CD4-positive, alpha-beta memory T cell (primary cell): ENCODE measurements at regions of chr1 and their contacts with region 1.

Region 1: GRCh38 chr1:185156854-185157598 is at the starts of genes SWT1 and TRMT1L:
- DNase-seq: peak; percentile 97 to 99 (median 98)
- H3K4me3 ChIP-seq: peak within 1 kb of the TSS; percentile 61 to 88
- H3K4me3 Mint-ChIP-seq: peak within 1 kb of the TSS; percentile 98 to 100 (median 99)
- H3K27ac ChIP-seq: peak within 1 kb of the TSS; percentile 97
- H3K27ac Mint-ChIP-seq: peak within 1 kb of the TSS; percentile 98 to 100 (median 99)
- H3K4me1 ChIP-seq: peaks cover 30% of the 10 kb centered on the region
- H3K4me1 Mint-ChIP-seq: peaks cover 24 to 54% (median 39%) of the 10 kb centered on the region in 4 donors
- H3K27me3 ChIP-seq: no peaks in the 10 kb centered on the region
- H3K27me3 Mint-ChIP-seq: no peaks in the 10 kb centered on the region
- total RNA-seq, gene SWT1: 9.7 to 10.6 TPM
- total RNA-seq, gene TRMT1L: 31.7 to 33.9 TPM

Region 2: GRCh38 chr1:183635606-183636333 is 1521.3 kb before region 1 on chr1 and contains the start of gene ARPC5:
- CTCF ChIA-PET with region 1: no interaction called
- POLR2A ChIA-PET with region 1: no interaction called
- intact Hi-C with region 1: loop called (anchors 1 kb)
- DNase-seq: peak; percentile 94 to 95 (median 94)
- H3K4me3 ChIP-seq: peak within 1 kb of the TSS; percentile 72 to 88
- H3K4me3 Mint-ChIP-seq: peak within 1 kb of the TSS; percentile 100
- H3K27ac ChIP-seq: peak within 1 kb of the TSS; percentile 81
- H3K27ac Mint-ChIP-seq: peak within 1 kb of the TSS; percentile 92 to 100 (median 99)
- H3K4me1 ChIP-seq: peaks cover 44% of the 10 kb centered on the region
- H3K4me1 Mint-ChIP-seq: peaks cover 26 to 54% (median 36%) of the 10 kb centered on the region in 4 donors
- H3K27me3 ChIP-seq: no peaks in the 10 kb centered on the region
- H3K27me3 Mint-ChIP-seq: no peaks in the 10 kb centered on the region
- total RNA-seq, gene ARPC5: 106 to 107 TPM

Region 3: DNA sequence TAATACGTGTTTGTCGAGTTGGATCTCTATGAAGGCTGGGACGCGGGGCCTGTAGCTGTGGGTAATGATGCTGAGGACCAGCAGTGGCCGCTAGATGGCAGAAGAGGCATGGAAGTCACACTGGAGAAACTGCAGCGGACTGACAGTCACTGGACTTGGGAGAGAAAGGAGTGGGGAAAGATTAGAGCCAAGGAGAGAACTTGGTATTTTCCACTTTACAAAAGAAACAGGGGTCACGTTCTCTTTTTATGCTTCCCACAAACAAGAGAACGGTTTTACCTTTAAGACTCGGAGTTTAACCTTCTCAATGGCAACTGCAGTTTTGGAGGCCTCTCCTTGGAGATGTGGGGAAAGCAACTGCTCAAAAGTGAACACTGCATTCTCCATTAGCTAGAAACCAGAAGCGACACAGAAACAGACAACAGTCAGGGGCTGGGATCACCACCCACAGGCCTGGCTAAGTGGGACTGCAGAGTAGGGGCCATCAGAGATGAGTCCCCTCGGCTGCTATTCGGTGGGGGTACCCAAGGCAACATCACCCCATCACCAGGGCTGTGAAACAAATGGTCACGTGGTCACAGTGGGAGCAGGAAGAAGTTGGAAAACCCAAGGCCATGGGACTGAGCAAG is 351.2 kb before region 1 on chr1:
- CTCF ChIA-PET with region 1: no interaction called
- POLR2A ChIA-PET with region 1: interaction called, 3 read pairs
- intact Hi-C with region 1: loop called (anchors 5 kb)
- DNase-seq: peak; percentile 76 to 80 (median 78)
- H3K4me3 ChIP-seq: no peak overlapping the region
- H3K4me3 Mint-ChIP-seq: no peak overlapping the region
- H3K27ac ChIP-seq: no peak overlapping the region
- H3K27ac Mint-ChIP-seq: peak overlapping the region; percentile 53 to 94 (median 86)
- H3K4me1 ChIP-seq: no peaks in the 10 kb centered on the region
- H3K4me1 Mint-ChIP-seq: peaks cover 4 to 7% (median 5%) of the 10 kb centered on the region in 4 donors
- H3K27me3 ChIP-seq: no peaks in the 10 kb centered on the region
- H3K27me3 Mint-ChIP-seq: no peaks in the 10 kb centered on the region

Region 4: GRCh38 chr1:185170291-185170848 is 13.3 kb after region 1 on chr1:
- CTCF ChIA-PET with region 1: interaction called, 15 read pairs
- POLR2A ChIA-PET with region 1: interaction called, 4 read pairs
- intact Hi-C with region 1: no loop called
- DNase-seq: peak; percentile 41 to 51 (median 44)
- H3K4me3 ChIP-seq: no peak overlapping the region
- H3K4me3 Mint-ChIP-seq: peak overlapping the region in 1 of 8 donors; percentile 57
- H3K27ac ChIP-seq: no peak overlapping the region
- H3K27ac Mint-ChIP-seq: peak overlapping the region in 4 of 7 donors; percentile 37 to 55 (median 40)
- H3K4me1 ChIP-seq: no peaks in the 10 kb centered on the region
- H3K4me1 Mint-ChIP-seq: peaks cover 0 to 4% (median 2%) of the 10 kb centered on the region in 4 donors
- H3K27me3 ChIP-seq: no peaks in the 10 kb centered on the region
- H3K27me3 Mint-ChIP-seq: no peaks in the 10 kb centered on the region

Region 5: DNA sequence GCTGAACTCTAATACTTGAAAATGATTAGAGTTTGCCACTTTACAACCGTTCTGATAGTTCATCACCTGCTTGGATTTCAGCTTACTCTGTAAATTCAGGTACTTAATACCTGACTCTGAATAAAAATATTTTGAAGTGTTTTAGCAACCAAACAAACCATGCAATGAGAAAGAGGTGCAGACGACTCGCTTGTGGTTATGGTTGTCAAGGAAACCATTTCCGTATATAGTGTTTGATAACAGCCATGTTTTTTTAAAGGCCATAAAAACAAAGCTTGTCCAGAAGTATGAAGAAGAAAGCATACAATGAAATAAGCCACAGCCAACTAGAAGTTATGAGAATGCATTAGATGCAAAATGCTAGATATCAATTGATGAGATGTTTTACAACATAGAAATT is 410.0 kb after region 1 on chr1:
- CTCF ChIA-PET with region 1: no interaction called
- POLR2A ChIA-PET with region 1: interaction called, 14 read pairs
- intact Hi-C with region 1: loop called (anchors 1 kb)
- DNase-seq: peak; percentile 85 to 94 (median 91)
- H3K4me3 ChIP-seq: peak overlapping the region in 1 of 2 donors; percentile 21
- H3K4me3 Mint-ChIP-seq: peak overlapping the region; percentile 26 to 87 (median 75)
- H3K27ac ChIP-seq: peak overlapping the region; percentile 80
- H3K27ac Mint-ChIP-seq: peak overlapping the region; percentile 94 to 100 (median 99)
- H3K4me1 ChIP-seq: peaks cover 81% of the 10 kb centered on the region
- H3K4me1 Mint-ChIP-seq: peaks cover 62 to 91% (median 75%) of the 10 kb centered on the region in 4 donors
- H3K27me3 ChIP-seq: no peaks in the 10 kb centered on the region
- H3K27me3 Mint-ChIP-seq: no peaks in the 10 kb centered on the region

Region 6: DNA sequence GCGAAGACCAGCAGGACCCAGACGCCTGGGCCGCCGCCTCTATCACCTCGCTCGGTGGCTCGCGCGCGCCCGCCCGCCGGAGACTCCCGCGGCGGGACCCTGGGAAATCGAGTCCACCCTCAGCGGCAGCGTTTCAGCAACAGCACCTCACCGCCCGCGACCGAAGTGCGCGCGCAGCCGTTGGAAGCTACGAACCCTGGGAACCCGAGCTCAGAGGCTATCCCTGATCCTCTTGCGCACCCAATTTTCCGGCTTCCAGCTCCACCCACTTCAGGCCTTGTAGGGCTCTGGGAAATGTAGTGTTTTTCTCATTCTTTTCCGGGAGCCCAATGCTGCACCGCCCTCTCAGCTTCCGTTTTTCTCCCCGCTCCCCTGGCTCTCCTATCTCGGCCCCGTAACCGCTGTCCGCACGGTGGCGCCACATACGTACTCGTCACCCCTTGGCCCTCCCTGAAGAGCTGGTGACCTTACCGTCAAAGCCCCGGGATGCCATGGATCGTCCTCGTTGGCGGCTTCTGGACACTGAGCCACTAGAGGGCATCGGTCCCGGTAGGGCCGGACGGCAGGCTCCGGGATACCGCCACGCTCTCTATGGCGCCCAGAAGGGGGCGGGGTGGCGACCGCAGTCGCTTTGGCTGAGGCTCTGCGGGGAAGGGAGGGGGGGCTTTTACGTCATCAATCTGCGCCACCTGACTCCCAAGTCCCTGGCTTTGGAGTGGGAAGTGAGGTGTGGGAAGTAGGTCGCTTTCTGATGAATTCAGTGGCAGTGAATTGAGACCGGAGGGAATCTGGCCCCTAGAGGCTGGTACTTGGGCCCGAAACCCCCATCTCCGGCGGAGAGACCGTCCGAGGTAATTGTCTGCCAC is 1218.3 kb after region 1 on chr1 and contains the starts of genes ODR4 and TPR:
- CTCF ChIA-PET with region 1: no interaction called
- POLR2A ChIA-PET with region 1: interaction called, 14 read pairs
- intact Hi-C with region 1: loop called (anchors 1 kb)
- DNase-seq: peak; percentile 97 to 99 (median 98)
- H3K4me3 ChIP-seq: peak within 1 kb of the TSS; percentile 87 to 96
- H3K4me3 Mint-ChIP-seq: peak within 1 kb of the TSS; percentile 91 to 99 (median 98)
- H3K27ac ChIP-seq: peak within 1 kb of the TSS; percentile 83
- H3K27ac Mint-ChIP-seq: peak within 1 kb of the TSS; percentile 93 to 99 (median 98)
- H3K4me1 ChIP-seq: peaks cover 44% of the 10 kb centered on the region
- H3K4me1 Mint-ChIP-seq: peaks cover 19 to 61% (median 39%) of the 10 kb centered on the region in 4 donors
- H3K27me3 ChIP-seq: no peaks in the 10 kb centered on the region
- H3K27me3 Mint-ChIP-seq: no peaks in the 10 kb centered on the region
- total RNA-seq, gene ODR4: 15.9 to 17.3 TPM
- total RNA-seq, gene TPR: 159 to 167 TPM